CD8-positive, alpha-beta T cell (primary cell): ENCODE measurements at regions of chr1 and their contacts with region 1.

Region 1: GRCh38 chr1:183915625-183916510 is 110.9 kb downstream of the RGL1 start:
- DNase-seq: peak; percentile 44 to 87 (median 70)
- ATAC-seq: peak; percentile 99
- H3K4me3 ChIP-seq: no peak overlapping the region
- H3K4me3 Mint-ChIP-seq: peak overlapping the region; percentile 0
- H3K27ac ChIP-seq: no peak overlapping the region
- H3K27ac Mint-ChIP-seq: peak overlapping the region; percentile 30
- H3K4me1 ChIP-seq: peaks cover 4% of the 10 kb centered on the region
- H3K4me1 Mint-ChIP-seq: peaks cover 10% of the 10 kb centered on the region
- H3K27me3 ChIP-seq: no peaks in the 10 kb centered on the region
- H3K27me3 Mint-ChIP-seq: no peaks in the 10 kb centered on the region
- CTCF ChIP-seq: peak; percentile 83

Region 2: DNA sequence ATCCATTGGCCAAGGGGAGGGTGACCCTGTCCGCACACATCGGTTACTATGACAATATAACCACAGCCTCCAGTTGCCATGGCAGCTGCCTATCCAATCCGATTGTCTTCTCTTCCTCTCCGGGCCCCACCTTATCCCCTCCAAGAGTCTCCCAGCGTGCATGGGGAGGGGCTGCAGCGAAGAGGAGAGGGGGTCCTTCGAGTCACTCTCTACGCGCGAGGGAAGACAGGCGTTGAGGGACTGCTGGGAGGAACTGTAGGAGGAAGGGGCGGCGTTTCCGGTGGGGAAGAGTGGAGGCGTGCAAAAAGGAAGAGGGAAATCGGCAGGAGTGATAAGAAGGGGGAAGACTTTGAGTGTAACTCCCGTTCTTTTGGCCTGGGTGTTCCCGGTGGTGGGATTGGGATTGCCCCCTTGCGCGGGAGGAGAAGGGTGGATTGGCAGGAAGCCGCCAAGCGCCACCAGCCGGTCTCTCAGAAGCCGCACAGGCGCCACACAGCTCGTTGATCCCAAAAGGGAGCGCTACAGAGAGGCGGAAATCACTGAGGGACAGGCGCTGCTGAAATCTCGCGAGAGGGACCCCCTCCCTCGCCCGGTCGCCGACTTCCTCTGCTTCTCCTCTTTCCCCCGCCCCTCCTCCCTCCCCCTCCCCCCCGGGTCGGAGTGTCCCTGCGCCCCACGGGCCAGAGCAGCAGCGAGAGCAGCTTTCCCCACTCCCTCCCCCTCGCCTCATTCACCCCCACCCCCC is 444.0 kb before region 1 on chr1:
- CTCF ChIA-PET with region 1: interaction called, 3 read pairs
- POLR2A ChIA-PET with region 1: no interaction called
- intact Hi-C with region 1: loop called (anchors 1 to 5 kb)
- DNase-seq: peak; percentile 92 to 98 (median 96)
- ATAC-seq: peak; percentile 65
- H3K4me3 ChIP-seq: peak overlapping the region; percentile 83 to 86
- H3K4me3 Mint-ChIP-seq: peak overlapping the region; percentile 98
- H3K27ac ChIP-seq: peak overlapping the region; percentile 90 to 97
- H3K27ac Mint-ChIP-seq: peak overlapping the region; percentile 99
- H3K4me1 ChIP-seq: peaks cover 32% of the 10 kb centered on the region
- H3K4me1 Mint-ChIP-seq: peaks cover 24% of the 10 kb centered on the region
- H3K27me3 ChIP-seq: no peaks in the 10 kb centered on the region
- H3K27me3 Mint-ChIP-seq: no peaks in the 10 kb centered on the region
- CTCF ChIP-seq: no peak

Region 3: GRCh38 chr1:183685112-183685713 is 230.7 kb before region 1 on chr1:
- CTCF ChIA-PET with region 1: interaction called, 40 read pairs
- POLR2A ChIA-PET with region 1: no interaction called
- intact Hi-C with region 1: loop called (anchors 1 to 10 kb)
- DNase-seq: peak in 3 of 9 experiments; percentile 18 to 69 (median 58)
- ATAC-seq: peak; percentile 83
- H3K4me3 ChIP-seq: no peak overlapping the region
- H3K4me3 Mint-ChIP-seq: no peak overlapping the region
- H3K27ac ChIP-seq: no peak overlapping the region
- H3K27ac Mint-ChIP-seq: no peak overlapping the region
- H3K4me1 ChIP-seq: no peaks in the 10 kb centered on the region
- H3K4me1 Mint-ChIP-seq: peaks cover 4% of the 10 kb centered on the region
- H3K27me3 ChIP-seq: no peaks in the 10 kb centered on the region
- H3K27me3 Mint-ChIP-seq: peaks cover 5% of the 10 kb centered on the region
- CTCF ChIP-seq: peak; percentile 83

Region 4: GRCh38 chr1:183892351-183892793 is 23.5 kb before region 1 on chr1:
- CTCF ChIA-PET with region 1: interaction called, 17 read pairs
- POLR2A ChIA-PET with region 1: no interaction called
- intact Hi-C with region 1: no loop called
- DNase-seq: no peak
- ATAC-seq: no peak
- H3K4me3 ChIP-seq: no peak overlapping the region
- H3K4me3 Mint-ChIP-seq: no peak overlapping the region
- H3K27ac ChIP-seq: no peak overlapping the region
- H3K27ac Mint-ChIP-seq: no peak overlapping the region
- H3K4me1 ChIP-seq: peaks cover 22% of the 10 kb centered on the region
- H3K4me1 Mint-ChIP-seq: peaks cover 35% of the 10 kb centered on the region
- H3K27me3 ChIP-seq: no peaks in the 10 kb centered on the region
- H3K27me3 Mint-ChIP-seq: no peaks in the 10 kb centered on the region
- CTCF ChIP-seq: no peak

Region 5: DNA sequence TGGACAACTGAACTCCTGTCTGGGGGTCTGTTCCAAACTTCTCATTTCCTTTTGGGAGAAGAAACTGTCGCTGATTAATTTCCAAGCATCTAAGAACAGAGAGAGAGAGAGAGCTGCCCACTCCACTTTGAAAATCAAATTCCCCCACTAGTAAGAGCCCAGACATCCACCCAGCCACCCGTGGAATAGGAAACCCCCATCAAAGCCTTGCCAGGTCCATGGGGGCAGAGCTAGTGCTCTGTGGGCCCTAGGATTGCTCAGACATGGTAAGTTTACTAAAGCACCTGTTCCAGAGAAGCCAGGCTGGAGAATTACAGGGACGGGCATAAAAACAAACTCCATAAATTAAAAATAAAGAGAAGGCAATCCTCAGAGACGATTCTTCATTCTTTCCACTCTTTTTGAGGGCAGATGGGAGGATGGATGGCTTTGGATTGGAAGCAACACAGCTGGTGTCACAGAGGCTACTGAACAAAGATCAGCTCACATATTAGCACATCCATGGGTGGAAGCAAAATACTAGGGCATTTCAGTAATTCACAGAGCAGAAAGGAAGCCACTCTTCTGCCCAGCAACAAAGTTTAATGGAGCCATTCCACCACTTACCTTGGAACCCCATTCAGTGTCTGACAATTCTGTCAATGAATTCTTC is 17.8 kb after region 1 on chr1:
- CTCF ChIA-PET with region 1: interaction called, 27 read pairs
- POLR2A ChIA-PET with region 1: no interaction called
- intact Hi-C with region 1: no loop called
- DNase-seq: no peak
- ATAC-seq: no peak
- H3K4me3 ChIP-seq: no peak overlapping the region
- H3K4me3 Mint-ChIP-seq: no peak overlapping the region
- H3K27ac ChIP-seq: no peak overlapping the region
- H3K27ac Mint-ChIP-seq: no peak overlapping the region
- H3K4me1 ChIP-seq: no peaks in the 10 kb centered on the region
- H3K4me1 Mint-ChIP-seq: peaks cover 2% of the 10 kb centered on the region
- H3K27me3 ChIP-seq: no peaks in the 10 kb centered on the region
- H3K27me3 Mint-ChIP-seq: no peaks in the 10 kb centered on the region
- CTCF ChIP-seq: no peak

Region 6: DNA sequence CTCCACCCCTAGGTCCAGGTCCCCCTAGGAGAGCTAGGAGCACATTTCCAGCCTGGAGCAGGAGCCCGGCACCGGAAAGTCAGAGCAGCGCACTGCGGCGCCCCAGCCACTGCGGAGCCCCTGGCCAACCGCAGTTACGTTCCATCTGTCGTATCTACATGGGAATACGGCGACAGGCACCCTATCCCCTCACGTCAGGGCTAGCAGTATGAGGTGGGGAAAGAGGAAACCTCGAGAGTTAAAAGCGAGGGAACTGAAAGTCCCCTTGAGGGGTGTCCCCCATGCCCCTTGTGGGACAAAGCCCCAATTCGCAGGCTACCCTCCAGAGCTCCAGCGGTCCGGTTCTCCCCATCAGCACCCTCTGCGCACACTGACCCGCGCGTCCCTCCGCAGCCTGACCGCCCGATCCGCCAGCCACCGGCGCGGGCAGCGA is 120.7 kb after region 1 on chr1:
- CTCF ChIA-PET with region 1: interaction called, 3 read pairs
- POLR2A ChIA-PET with region 1: interaction called, 3 read pairs
- intact Hi-C with region 1: loop called in 1 of 2 experiments (anchors 5 kb)
- DNase-seq: peak in 5 of 9 experiments; percentile 12 to 56 (median 44)
- ATAC-seq: peak; percentile 38
- H3K4me3 ChIP-seq: peak overlapping the region; percentile 45 to 57
- H3K4me3 Mint-ChIP-seq: peak overlapping the region; percentile 71
- H3K27ac ChIP-seq: no peak overlapping the region
- H3K27ac Mint-ChIP-seq: no peak overlapping the region
- H3K4me1 ChIP-seq: peaks cover 7% of the 10 kb centered on the region
- H3K4me1 Mint-ChIP-seq: peaks cover 15% of the 10 kb centered on the region
- H3K27me3 ChIP-seq: peaks cover 0 to 3% of the 10 kb centered on the region in 2 experiments
- H3K27me3 Mint-ChIP-seq: peaks cover 46% of the 10 kb centered on the region
- CTCF ChIP-seq: no peak

Region 7: DNA sequence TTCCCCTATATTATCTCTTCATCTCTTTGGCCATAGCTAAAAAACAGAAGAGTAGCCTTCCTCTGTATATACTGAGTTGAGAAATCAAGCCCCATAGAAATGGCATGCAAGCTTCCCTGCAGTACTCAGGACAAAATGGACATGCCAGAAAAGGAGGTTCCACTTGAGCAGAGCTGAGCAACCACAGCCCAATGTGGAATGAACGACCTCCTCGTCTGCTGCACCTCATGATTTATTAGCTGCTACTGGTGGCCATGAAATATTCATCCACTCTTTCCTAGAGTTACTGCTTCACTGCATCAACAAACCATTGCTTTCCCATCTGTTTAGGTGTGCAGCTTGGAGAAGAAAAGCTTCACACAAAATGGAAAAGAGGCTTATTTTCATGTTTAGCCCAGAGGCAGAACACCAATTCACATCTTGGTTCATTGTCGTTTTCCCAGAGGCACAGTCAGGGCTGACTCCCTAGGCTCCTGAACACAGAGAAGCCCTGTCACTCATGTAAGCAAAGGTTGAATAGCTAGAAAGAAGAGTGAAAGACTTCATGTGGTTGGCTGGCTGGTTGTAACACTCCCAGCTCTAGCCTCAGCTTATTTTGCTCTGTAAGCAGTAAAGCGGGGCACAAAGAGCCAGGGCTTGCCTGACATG is 283.7 kb after region 1 on chr1:
- CTCF ChIA-PET with region 1: no interaction called
- POLR2A ChIA-PET with region 1: no interaction called
- intact Hi-C with region 1: no loop called
- DNase-seq: no peak
- ATAC-seq: no peak
- H3K4me3 ChIP-seq: no peak overlapping the region
- H3K4me3 Mint-ChIP-seq: no peak overlapping the region
- H3K27ac ChIP-seq: no peak overlapping the region
- H3K27ac Mint-ChIP-seq: no peak overlapping the region
- H3K4me1 ChIP-seq: no peaks in the 10 kb centered on the region
- H3K4me1 Mint-ChIP-seq: no peaks in the 10 kb centered on the region
- H3K27me3 ChIP-seq: no peaks in the 10 kb centered on the region
- H3K27me3 Mint-ChIP-seq: no peaks in the 10 kb centered on the region
- CTCF ChIP-seq: no peak

Region 8: GRCh38 chr1:184222652-184223052 is 306.8 kb after region 1 on chr1:
- CTCF ChIA-PET with region 1: interaction called, 6 read pairs
- POLR2A ChIA-PET with region 1: no interaction called
- intact Hi-C with region 1: loop called in 1 of 2 experiments (anchors 1 kb)
- DNase-seq: peak in 7 of 9 experiments; percentile 16 to 57 (median 49)
- ATAC-seq: no peak
- H3K4me3 ChIP-seq: no peak overlapping the region
- H3K4me3 Mint-ChIP-seq: no peak overlapping the region
- H3K27ac ChIP-seq: no peak overlapping the region
- H3K27ac Mint-ChIP-seq: no peak overlapping the region
- H3K4me1 ChIP-seq: no peaks in the 10 kb centered on the region
- H3K4me1 Mint-ChIP-seq: no peaks in the 10 kb centered on the region
- H3K27me3 ChIP-seq: no peaks in the 10 kb centered on the region
- H3K27me3 Mint-ChIP-seq: peaks cover 6% of the 10 kb centered on the region
- CTCF ChIP-seq: peak; percentile 85